A673 (cell line): ENCODE measurements at regions of chr2 and their contacts with region 1.

Region 1: DNA sequence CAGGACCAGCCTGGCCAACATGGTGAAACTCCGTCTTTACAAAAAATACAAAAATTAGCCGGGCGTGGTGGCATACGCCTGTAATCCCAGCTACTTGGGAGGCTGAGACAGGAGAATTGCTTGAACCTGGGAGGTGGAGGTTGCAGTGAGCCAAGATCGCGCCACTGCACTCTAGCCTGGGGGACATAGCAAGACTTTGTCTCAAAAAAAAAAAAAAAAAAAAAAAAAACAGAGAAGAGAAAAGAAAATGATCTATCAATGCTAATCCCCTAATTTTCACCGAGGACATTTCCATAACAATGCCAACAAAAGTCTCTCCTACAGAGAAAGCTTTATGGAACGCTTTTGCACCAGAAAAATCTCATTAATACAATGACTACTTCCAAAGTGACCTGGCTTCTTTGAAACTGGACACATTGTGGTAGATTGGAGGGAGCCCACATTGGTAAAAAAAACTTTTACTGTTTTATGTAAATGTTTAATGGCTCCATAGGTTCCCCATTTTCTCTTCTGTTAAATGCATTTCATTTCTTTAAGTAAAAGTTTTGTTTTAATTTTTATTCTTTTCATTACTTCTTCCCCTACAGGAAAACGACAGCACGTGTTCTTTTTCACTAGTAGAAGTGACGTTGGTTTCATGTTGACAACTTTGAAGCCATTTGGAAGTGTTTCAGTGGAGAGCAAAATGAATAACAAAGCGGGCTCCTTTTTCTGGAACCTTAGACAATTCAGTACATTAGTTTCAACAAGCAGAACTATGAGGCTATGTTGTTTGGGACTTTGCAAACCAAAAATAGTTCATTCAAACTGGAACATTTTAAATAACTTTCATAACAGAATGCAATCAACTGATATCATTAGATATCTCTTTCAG is 888 bp downstream of the FASTKD2 start:
- DNase-seq: peak; percentile 6
- H3K4me3 ChIP-seq: peak overlapping the region; percentile 98
- H3K27ac ChIP-seq: peak overlapping the region; percentile 88
- H3K4me1 ChIP-seq: peaks cover 3% of the 10 kb centered on the region
- H3K27me3 ChIP-seq: peaks cover 3% of the 10 kb centered on the region
- CTCF ChIP-seq: no peak

Region 2: GRCh38 chr2:206867006-206867405 is 100.7 kb after region 1 on chr2:
- CTCF ChIA-PET with region 1: no interaction called
- POLR2A ChIA-PET with region 1: interaction called, 18 read pairs
- intact Hi-C with region 1: no loop called
- DNase-seq: no peak
- H3K4me3 ChIP-seq: no peak overlapping the region
- H3K27ac ChIP-seq: no peak overlapping the region
- H3K4me1 ChIP-seq: no peaks in the 10 kb centered on the region
- H3K27me3 ChIP-seq: no peaks in the 10 kb centered on the region
- CTCF ChIP-seq: no peak

Region 3: GRCh38 chr2:206881708-206882410 is 115.6 kb after region 1 on chr2:
- CTCF ChIA-PET with region 1: no interaction called
- POLR2A ChIA-PET with region 1: no interaction called
- intact Hi-C with region 1: no loop called
- DNase-seq: no peak
- H3K4me3 ChIP-seq: no peak overlapping the region
- H3K27ac ChIP-seq: no peak overlapping the region
- H3K4me1 ChIP-seq: no peaks in the 10 kb centered on the region
- H3K27me3 ChIP-seq: peaks cover 8% of the 10 kb centered on the region
- CTCF ChIP-seq: no peak

Region 4: GRCh38 chr2:206981739-206982340 is 215.5 kb after region 1 on chr2:
- CTCF ChIA-PET with region 1: interaction called, 11 read pairs
- POLR2A ChIA-PET with region 1: no interaction called
- intact Hi-C with region 1: no loop called
- DNase-seq: peak; percentile 65
- H3K4me3 ChIP-seq: no peak overlapping the region
- H3K27ac ChIP-seq: no peak overlapping the region
- H3K4me1 ChIP-seq: no peaks in the 10 kb centered on the region
- H3K27me3 ChIP-seq: peaks cover 38% of the 10 kb centered on the region
- CTCF ChIP-seq: peak; percentile 71